AG04449 (cell line): ENCODE measurements at regions of chr6 and their contacts with region 1.

Region 1: GRCh38 chr6:26342106-26343004 is 22.6 kb upstream of the BTN3A2 start:
- DNase-seq: no peak
- H3K4me3 ChIP-seq: peak overlapping the region; percentile 37
- CTCF ChIP-seq: no peak

Region 2: GRCh38 chr6:26025894-26026832 is 316.2 kb before region 1 on chr6:
- CTCF ChIA-PET with region 1: no interaction called
- POLR2A ChIA-PET with region 1: no interaction called
- DNase-seq: no peak
- H3K4me3 ChIP-seq: peak overlapping the region; percentile 84
- CTCF ChIP-seq: peak; percentile 90

Region 3: GRCh38 chr6:26411751-26412150 is 69.4 kb after region 1 on chr6:
- CTCF ChIA-PET with region 1: interaction called, 12 read pairs
- POLR2A ChIA-PET with region 1: no interaction called
- DNase-seq: no peak
- H3K4me3 ChIP-seq: no peak overlapping the region
- CTCF ChIP-seq: no peak

Region 4: GRCh38 chr6:26532699-26533531 is 190.6 kb after region 1 on chr6:
- CTCF ChIA-PET with region 1: interaction called, 12 read pairs
- POLR2A ChIA-PET with region 1: interaction called, 5 read pairs
- DNase-seq: no peak
- H3K4me3 ChIP-seq: peak overlapping the region; percentile 75
- CTCF ChIP-seq: no peak

Region 5: GRCh38 chr6:26568601-26569432 is 226.5 kb after region 1 on chr6:
- CTCF ChIA-PET with region 1: interaction called, 16 read pairs
- POLR2A ChIA-PET with region 1: no interaction called
- DNase-seq: no peak
- H3K4me3 ChIP-seq: peak overlapping the region; percentile 80
- CTCF ChIP-seq: peak; percentile 18